Astrocyte of the cerebellum (primary cell): ENCODE measurements at regions of chr14 and their contacts with region 1.

Region 1: DNA sequence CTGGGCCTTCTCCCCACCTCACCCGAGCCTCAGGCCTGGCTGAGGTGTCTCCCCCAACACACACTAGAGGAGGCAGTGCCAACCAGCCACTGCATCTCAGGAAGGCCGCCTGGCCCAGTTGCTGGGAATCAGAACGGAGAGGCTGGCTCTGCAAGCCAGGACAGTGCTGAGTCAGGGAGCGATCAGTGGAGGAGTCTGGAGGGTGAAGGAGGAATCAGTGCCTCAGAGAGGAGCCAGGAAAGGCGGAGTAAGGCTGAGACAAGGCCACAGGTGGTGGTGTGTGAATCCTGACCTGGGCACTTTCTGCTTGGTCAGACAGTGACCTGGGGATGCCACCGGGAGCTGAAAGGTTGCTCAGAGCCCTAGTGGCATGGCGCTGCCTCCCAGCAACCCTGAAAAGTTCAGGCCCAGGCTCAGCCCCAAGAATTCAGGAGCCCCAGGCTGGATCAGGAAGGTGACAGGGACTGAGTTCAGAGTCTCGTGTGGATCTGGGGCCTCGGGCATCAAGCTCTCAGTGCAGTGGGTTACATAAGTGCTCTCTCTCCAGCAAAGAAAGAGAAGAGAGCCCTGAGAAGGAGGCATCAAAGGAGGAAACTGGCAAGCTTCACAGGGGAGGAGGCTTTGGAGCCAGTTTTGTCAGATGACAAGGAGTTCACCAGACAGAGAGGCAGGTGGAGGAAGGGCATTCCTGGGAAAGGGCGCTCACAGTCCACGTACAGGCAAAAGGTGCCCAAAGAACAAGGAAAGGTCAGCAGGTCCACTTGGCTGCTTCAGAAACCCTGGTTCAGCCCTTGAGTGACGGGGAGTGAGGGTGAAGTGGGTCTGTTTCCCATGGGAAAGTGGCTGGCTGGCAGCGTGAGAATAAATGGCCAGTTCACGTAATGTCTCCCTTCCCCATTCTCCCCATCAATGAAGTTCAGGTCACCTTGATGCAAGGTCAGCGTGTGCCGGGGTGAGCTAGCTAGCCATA is 87.8 kb downstream of the ZFP36L1 start:
- DNase-seq: no peak
- H3K4me3 ChIP-seq: no peak overlapping the region
- CTCF ChIP-seq: no peak

Region 2: DNA sequence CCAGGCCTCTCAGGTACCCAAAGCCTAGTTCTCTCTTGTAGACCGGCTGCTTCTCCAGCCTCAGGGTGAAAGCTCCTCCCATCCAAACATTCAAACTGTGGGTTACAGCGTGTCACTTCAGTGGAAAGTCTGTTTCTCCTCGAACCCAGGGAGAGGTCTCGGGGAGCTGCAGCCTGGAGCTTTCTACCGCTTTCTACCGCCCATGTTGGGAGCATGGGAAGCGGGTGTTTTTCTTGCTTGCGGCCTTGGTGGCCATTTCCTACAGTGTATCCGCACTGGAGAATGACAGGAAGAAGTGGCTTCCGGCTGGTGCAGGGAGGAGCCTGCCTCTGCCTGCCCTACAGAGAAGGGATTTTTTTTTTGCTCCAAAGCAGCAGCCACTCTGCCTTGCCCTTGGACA is 66.6 kb after region 1 on chr14:
- in situ Hi-C with region 1: loop called (anchors 5 kb)
- DNase-seq: no peak
- H3K4me3 ChIP-seq: no peak overlapping the region
- CTCF ChIP-seq: no peak